Cardiac septum (tissue), 1 donor: ENCODE measurements at regions of chr4 and their contacts with region 1.

Region 1: GRCh38 chr4:139509727-139510410 is 46.1 kb downstream of the SETD7 start:
- DNase-seq: no peak

Region 2: GRCh38 chr4:139416073-139416673 is 93.7 kb before region 1 on chr4:
- intact Hi-C with region 1: loop called (anchors 10 kb)
- DNase-seq: no peak